Activated CD4-positive, alpha-beta memory T cell treated with anti-CD3 and anti-CD28 coated beads, Interleukin-2, amount 10 ng/mL, durations not matched to agents 7 days and 5 days (primary cell): ENCODE measurements at regions of chr19 and their contacts with region 1.

Region 1: GRCh38 chr19:46840136-46840942 is 10.3 kb downstream of the AP2S1 start:
- DNase-seq: peak; percentile 62
- H3K4me3 Mint-ChIP-seq: no peak overlapping the region
- H3K27ac Mint-ChIP-seq: peak overlapping the region; percentile 26
- H3K4me1 Mint-ChIP-seq: peaks cover 1% of the 10 kb centered on the region
- H3K27me3 Mint-ChIP-seq: no peaks in the 10 kb centered on the region

Region 2: GRCh38 chr19:46614114-46614722 is 226.1 kb before region 1 on chr19:
- CTCF ChIA-PET with region 1: interaction called, 10 read pairs
- POLR2A ChIA-PET with region 1: no interaction called
- DNase-seq: peak; percentile 81
- H3K4me3 Mint-ChIP-seq: no peak overlapping the region
- H3K27ac Mint-ChIP-seq: peak overlapping the region; percentile 66
- H3K4me1 Mint-ChIP-seq: peaks cover 74% of the 10 kb centered on the region
- H3K27me3 Mint-ChIP-seq: no peaks in the 10 kb centered on the region

Region 3: GRCh38 chr19:46746281-46747013 is 93.9 kb before region 1 on chr19 and contains the start of gene STRN4:
- CTCF ChIA-PET with region 1: interaction called, 82 read pairs
- POLR2A ChIA-PET with region 1: interaction called, 4 read pairs
- DNase-seq: peak; percentile 65
- H3K4me3 Mint-ChIP-seq: peak within 1 kb of the TSS; percentile 93
- H3K27ac Mint-ChIP-seq: peak within 1 kb of the TSS; percentile 80
- H3K4me1 Mint-ChIP-seq: peaks cover 53% of the 10 kb centered on the region
- H3K27me3 Mint-ChIP-seq: no peaks in the 10 kb centered on the region
- total RNA-seq, gene STRN4: 75.1 to 78.5 TPM

Region 4: DNA sequence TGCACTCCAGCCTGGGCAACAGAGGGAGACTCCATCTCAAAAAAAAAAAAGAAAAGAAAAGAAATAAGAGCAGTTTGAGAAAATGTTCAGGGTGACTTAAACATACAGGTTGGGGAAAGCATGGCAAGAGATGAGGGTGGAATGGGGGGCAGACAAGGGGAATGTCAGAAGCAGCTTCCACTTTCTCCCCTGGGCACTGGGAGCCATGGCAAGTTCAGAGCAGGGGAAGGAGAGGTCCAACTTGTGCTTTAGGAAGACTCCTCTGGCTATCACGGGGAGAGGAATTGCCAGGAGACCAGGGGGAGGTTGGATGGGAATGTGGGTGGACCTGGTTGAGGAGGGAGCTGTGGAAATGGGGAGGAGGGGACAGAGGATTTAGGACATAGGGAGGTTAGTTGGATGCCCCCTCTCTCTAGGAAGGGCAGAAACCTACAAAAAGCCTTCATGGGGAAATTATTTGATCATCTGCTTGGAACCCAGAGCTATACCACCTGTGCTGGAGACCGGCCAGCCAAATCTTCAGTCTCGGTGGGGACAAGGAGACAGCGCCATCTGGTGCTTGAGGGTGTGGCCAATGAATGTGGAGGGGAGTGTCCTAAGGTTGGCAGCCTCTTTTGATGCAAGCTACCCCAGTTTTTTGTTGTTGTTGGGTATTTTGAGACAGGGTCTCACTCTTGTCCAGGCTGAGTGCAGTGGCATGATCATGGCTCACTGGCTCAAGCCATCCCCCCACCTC is 86.8 kb before region 1 on chr19:
- CTCF ChIA-PET with region 1: interaction called, 82 read pairs
- POLR2A ChIA-PET with region 1: interaction called, 11 read pairs
- DNase-seq: peak; percentile 79
- H3K4me3 Mint-ChIP-seq: no peak overlapping the region
- H3K27ac Mint-ChIP-seq: no peak overlapping the region
- H3K4me1 Mint-ChIP-seq: peaks cover 20% of the 10 kb centered on the region
- H3K27me3 Mint-ChIP-seq: no peaks in the 10 kb centered on the region

Region 5: DNA sequence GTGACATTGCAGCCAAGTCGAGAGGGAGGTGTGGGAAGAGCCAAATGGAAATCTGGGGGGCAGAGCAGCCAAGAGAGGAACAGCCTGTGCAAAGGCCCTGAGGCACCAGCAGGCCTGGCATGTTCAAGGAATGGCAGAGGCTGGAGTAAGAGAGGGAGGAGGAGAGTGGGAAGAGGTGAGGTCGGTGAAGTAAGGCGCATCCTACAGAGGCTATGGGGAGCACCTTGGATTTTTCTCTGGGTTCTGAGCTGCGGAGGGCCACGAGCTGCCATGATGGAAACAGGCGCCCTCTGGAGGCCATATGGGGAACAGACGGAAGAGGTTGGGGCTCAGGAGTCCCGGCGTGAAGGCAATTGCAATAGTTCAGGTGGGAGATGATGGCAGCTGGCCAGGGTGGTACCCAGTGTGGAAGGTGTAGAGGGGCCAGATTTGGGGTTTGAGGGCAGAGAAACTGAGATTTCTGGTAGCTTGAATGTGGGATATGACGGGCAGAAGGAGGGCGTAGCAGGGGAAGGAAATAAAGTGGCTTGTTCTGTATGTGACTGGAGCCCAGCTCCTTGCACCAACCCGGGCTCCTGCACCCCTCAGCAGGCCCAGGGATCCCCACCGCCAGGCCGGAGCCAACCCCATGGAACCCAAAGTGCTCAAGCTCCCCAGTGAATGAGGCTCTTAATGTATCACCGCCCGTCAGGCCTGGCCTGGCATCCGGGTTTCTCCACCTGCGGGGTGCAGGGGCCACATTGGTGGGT is 73.6 kb before region 1 on chr19:
- CTCF ChIA-PET with region 1: interaction called, 24 read pairs
- POLR2A ChIA-PET with region 1: interaction called, 4 read pairs
- DNase-seq: peak; percentile 73
- H3K4me3 Mint-ChIP-seq: no peak overlapping the region
- H3K27ac Mint-ChIP-seq: no peak overlapping the region
- H3K4me1 Mint-ChIP-seq: peaks cover 4% of the 10 kb centered on the region
- H3K27me3 Mint-ChIP-seq: no peaks in the 10 kb centered on the region

Region 6: GRCh38 chr19:46776927-46777911 is 63.1 kb before region 1 on chr19:
- CTCF ChIA-PET with region 1: interaction called, 10 read pairs
- POLR2A ChIA-PET with region 1: no interaction called
- DNase-seq: no peak
- H3K4me3 Mint-ChIP-seq: no peak overlapping the region
- H3K27ac Mint-ChIP-seq: no peak overlapping the region
- H3K4me1 Mint-ChIP-seq: peaks cover 48% of the 10 kb centered on the region
- H3K27me3 Mint-ChIP-seq: no peaks in the 10 kb centered on the region

Region 7: DNA sequence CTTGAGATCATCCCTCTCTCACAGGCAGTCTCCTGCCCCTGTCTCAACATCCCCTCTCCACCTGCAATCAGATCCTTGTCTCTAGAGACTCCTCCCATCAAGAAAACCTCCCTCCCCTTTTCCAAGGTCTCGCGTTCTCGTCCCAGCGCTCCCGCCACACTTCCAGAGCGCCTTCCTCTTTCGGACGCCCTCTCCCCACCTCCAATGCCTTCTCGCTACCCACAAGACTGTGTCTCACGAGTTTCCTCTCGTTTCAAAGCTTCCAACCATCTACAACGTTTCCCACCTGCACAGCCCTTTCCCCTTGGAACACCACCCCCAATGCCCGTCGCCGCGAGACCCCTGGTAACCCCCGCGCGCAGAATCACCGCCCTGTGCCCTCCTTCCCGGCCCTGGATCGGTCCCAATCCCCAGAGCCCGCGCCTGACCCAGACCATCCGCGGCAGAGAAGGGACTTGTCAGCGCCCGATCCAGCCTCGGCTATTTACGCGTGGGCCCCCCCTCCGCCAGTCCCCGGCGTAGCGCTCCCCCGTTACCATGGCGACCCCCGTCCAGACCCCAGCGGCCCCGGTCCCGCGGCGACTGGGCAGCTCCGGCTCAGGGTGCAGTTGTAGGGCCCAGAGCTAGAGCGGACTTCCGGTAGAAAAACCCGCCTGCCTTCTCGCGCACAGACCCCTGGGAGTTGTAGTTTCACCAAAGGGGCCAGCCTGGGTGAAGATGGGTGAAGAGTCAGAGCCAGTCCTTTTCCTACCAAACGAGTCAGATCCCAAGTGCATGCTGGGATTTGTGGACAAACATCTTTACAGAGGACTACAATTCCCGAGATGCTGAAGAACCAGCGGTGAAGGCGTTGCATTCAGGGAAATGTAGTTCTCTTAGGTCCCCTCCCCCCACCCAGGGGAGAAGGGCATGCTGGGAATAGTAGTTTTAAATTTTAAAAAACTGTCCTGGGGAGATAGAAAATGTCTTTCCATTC is 10.2 kb after region 1 on chr19 and contains the start of gene AP2S1:
- CTCF ChIA-PET with region 1: interaction called, 9 read pairs
- POLR2A ChIA-PET with region 1: interaction called, 10 read pairs
- DNase-seq: peak; percentile 94
- H3K4me3 Mint-ChIP-seq: peak within 1 kb of the TSS; percentile 92
- H3K27ac Mint-ChIP-seq: peak within 1 kb of the TSS; percentile 78
- H3K4me1 Mint-ChIP-seq: peaks cover 33% of the 10 kb centered on the region
- H3K27me3 Mint-ChIP-seq: no peaks in the 10 kb centered on the region
- total RNA-seq, gene AP2S1: 116 to 117 TPM

Region 8: GRCh38 chr19:46875234-46875633 is 34.9 kb after region 1 on chr19:
- CTCF ChIA-PET with region 1: no interaction called
- POLR2A ChIA-PET with region 1: no interaction called
- DNase-seq: no peak
- H3K4me3 Mint-ChIP-seq: no peak overlapping the region
- H3K27ac Mint-ChIP-seq: no peak overlapping the region
- H3K4me1 Mint-ChIP-seq: peaks cover 6% of the 10 kb centered on the region
- H3K27me3 Mint-ChIP-seq: no peaks in the 10 kb centered on the region